Activated naive CD4-positive, alpha-beta T cell treated with anti-CD3 and anti-CD28 coated beads for 36 hours (primary cell): ENCODE measurements at regions of chr4 and their contacts with region 1.

Region 1: GRCh38 chr4:79576429-79576753 is 168.4 kb upstream of the GK2 start:
- DNase-seq: peak; percentile 25
- H3K4me3 Mint-ChIP-seq: no peak overlapping the region
- H3K27ac Mint-ChIP-seq: no peak overlapping the region
- H3K4me1 Mint-ChIP-seq: no peaks in the 10 kb centered on the region
- H3K27me3 Mint-ChIP-seq: no peaks in the 10 kb centered on the region

Region 2: GRCh38 chr4:78990938-78991810 is 585.2 kb before region 1 on chr4:
- CTCF ChIA-PET with region 1: no interaction called
- intact Hi-C with region 1: no loop called
- DNase-seq: no peak
- H3K4me3 Mint-ChIP-seq: no peak overlapping the region
- H3K27ac Mint-ChIP-seq: no peak overlapping the region
- H3K4me1 Mint-ChIP-seq: no peaks in the 10 kb centered on the region
- H3K27me3 Mint-ChIP-seq: peaks cover 9% of the 10 kb centered on the region

Region 3: DNA sequence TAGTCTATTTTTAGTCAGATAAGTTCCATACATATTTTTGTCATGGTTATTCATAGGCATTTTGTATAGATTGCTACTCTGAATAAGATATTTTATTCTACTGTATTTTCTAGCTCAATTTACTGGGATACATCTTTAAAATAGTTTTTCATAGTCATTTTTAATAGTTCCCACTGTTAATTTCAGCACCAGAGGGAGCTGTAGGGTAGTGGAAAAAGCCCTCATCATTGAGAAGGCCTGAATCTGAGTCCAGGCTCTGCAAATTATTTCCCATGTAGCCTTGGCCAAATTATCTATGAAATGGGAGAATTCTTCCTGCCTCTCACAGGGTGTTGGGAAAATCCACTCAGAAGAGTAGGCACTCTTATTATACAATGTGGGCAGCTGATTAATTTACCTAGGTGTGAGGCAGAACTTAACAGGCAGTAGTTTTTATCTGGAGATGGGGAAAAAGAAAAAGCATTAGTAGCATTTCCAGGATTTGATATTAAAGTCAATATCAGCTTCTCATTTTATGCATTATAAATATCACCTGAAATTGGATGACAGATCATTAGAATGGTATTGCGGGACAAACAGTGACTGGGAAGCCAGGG is 534.2 kb before region 1 on chr4:
- CTCF ChIA-PET with region 1: no interaction called
- intact Hi-C with region 1: loop called (anchors 1 kb)
- DNase-seq: peak; percentile 7
- H3K4me3 Mint-ChIP-seq: no peak overlapping the region
- H3K27ac Mint-ChIP-seq: no peak overlapping the region
- H3K4me1 Mint-ChIP-seq: no peaks in the 10 kb centered on the region
- H3K27me3 Mint-ChIP-seq: no peaks in the 10 kb centered on the region

Region 4: DNA sequence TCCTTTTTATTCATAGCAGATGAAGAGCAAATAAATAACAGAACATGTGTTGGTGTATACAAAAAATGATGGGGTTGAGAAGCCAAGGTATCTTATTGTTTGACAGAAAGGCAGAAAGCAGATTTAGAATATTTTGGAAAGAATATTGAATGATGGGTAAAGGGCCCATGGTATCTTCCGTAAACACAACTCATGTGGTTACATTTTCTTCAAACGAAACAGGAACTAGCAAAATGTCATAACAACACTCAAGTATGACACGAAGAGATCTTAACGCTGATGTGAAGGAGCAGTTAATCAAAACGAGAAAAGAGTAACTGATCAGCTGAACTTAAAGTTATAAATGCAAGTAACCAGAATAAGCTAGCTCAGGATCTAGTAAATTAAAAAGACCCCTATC is 27.3 kb after region 1 on chr4:
- CTCF ChIA-PET with region 1: no interaction called
- intact Hi-C with region 1: no loop called
- DNase-seq: no peak
- H3K4me3 Mint-ChIP-seq: no peak overlapping the region
- H3K27ac Mint-ChIP-seq: no peak overlapping the region
- H3K4me1 Mint-ChIP-seq: peaks cover 10% of the 10 kb centered on the region
- H3K27me3 Mint-ChIP-seq: peaks cover 3% of the 10 kb centered on the region